Activated CD8-positive, alpha-beta T cell treated with anti-CD3 and anti-CD28 coated beads, Interleukin-2, amount 10 ng/mL, durations not matched to agents 7 days and 5 days (primary cell): ENCODE measurements at regions of chr15 and their contacts with region 1.

Region 1: DNA sequence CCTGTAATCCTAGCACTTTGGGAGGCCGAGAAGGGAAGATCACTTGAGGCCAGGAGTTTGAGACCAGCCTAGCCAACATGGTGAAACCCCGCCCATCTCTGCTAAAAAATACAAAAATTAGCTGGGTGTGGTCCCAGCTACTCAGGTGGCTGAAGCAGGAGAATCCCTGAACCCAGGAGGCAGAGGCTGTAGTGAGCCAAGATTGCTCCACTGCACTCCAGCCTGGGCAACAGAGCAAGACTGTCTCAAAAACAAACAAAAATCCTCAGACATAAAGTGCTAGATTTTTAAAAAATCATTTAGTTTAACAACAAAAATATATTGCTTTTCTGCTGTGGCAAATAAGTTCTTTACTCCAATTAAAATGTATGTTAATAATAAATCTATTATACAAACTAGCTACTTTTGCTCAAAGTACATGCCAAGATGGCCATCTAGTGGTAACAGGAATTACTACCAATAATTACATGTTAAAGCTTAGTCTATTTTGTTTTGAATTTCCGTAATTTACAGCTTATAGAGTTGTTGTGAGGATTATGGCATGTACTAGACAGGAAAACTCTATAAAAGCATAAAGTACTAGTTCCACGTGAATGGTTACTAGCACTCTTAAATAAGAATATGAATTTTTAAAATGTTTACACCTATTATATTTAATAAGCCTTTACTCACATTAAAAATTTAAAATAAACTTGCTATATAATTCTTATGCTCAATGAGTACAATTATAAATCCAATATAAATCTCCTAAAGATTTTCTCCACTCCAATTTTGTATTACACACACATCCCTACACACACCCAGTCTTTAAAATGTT is 39.0 kb downstream of the GABPB1 start:
- DNase-seq: no peak
- ATAC-seq: peak; percentile 51
- H3K4me3 Mint-ChIP-seq: no peak overlapping the region
- H3K27ac Mint-ChIP-seq: no peak overlapping the region
- H3K4me1 Mint-ChIP-seq: peaks cover 17% of the 10 kb centered on the region
- H3K27me3 Mint-ChIP-seq: no peaks in the 10 kb centered on the region

Region 2: GRCh38 chr15:50145451-50145872 is 170.6 kb before region 1 on chr15:
- CTCF ChIA-PET with region 1: interaction called, 19 read pairs
- POLR2A ChIA-PET with region 1: interaction called, 7 read pairs
- DNase-seq: no peak
- ATAC-seq: peak; percentile 47
- H3K4me3 Mint-ChIP-seq: no peak overlapping the region
- H3K27ac Mint-ChIP-seq: no peak overlapping the region
- H3K4me1 Mint-ChIP-seq: peaks cover 35% of the 10 kb centered on the region
- H3K27me3 Mint-ChIP-seq: no peaks in the 10 kb centered on the region

Region 3: DNA sequence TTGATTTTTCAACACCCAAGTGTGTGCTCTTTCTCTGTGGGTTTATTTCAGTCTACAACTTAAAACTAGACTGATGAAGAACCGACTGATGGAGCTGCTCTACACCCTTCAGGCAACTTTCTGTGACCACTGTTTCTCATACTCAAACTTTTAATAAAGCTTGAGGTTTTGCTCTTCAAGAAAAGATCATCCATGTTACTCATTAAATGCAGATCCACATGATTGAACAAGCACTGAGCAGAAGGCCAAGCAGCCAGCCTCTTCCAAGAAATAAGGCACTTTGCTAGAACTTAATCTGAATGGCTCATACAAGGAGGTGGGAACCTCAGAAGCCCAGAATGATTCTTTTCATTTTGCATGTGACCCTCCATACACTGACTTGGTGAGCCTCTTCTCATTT is 125.3 kb before region 1 on chr15:
- CTCF ChIA-PET with region 1: interaction called, 19 read pairs
- POLR2A ChIA-PET with region 1: no interaction called
- DNase-seq: no peak
- ATAC-seq: no peak
- H3K4me3 Mint-ChIP-seq: no peak overlapping the region
- H3K27ac Mint-ChIP-seq: no peak overlapping the region
- H3K4me1 Mint-ChIP-seq: peaks cover 4% of the 10 kb centered on the region
- H3K27me3 Mint-ChIP-seq: no peaks in the 10 kb centered on the region

Region 4: GRCh38 chr15:50256188-50257041 is 59.6 kb before region 1 on chr15:
- CTCF ChIA-PET with region 1: interaction called, 26 read pairs
- POLR2A ChIA-PET with region 1: no interaction called
- DNase-seq: peak; percentile 12
- ATAC-seq: no peak
- H3K4me3 Mint-ChIP-seq: no peak overlapping the region
- H3K27ac Mint-ChIP-seq: no peak overlapping the region
- H3K4me1 Mint-ChIP-seq: peaks cover 58% of the 10 kb centered on the region
- H3K27me3 Mint-ChIP-seq: no peaks in the 10 kb centered on the region